Endothelial cell of umbilical vein (primary cell): ENCODE measurements at regions of chr11 and their contacts with region 1.

Region 1: GRCh38 chr11:111766093-111766833 is at the start of gene PPP2R1B:
- DNase-seq: peak; percentile 83
- H3K4me3 ChIP-seq: peak within 1 kb of the TSS; percentile 68 to 85 (median 73)
- H3K27ac ChIP-seq: peak within 1 kb of the TSS; percentile 51
- H3K4me1 ChIP-seq: peaks cover 15% of the 10 kb centered on the region
- H3K27me3 ChIP-seq: no peaks in the 10 kb centered on the region
- CTCF ChIP-seq: no peak
- POLR2A ChIP-seq: peak; percentile 16
- total RNA-seq, gene PPP2R1B: 42.7 and 50.8 TPM in 2 replicates

Region 2: DNA sequence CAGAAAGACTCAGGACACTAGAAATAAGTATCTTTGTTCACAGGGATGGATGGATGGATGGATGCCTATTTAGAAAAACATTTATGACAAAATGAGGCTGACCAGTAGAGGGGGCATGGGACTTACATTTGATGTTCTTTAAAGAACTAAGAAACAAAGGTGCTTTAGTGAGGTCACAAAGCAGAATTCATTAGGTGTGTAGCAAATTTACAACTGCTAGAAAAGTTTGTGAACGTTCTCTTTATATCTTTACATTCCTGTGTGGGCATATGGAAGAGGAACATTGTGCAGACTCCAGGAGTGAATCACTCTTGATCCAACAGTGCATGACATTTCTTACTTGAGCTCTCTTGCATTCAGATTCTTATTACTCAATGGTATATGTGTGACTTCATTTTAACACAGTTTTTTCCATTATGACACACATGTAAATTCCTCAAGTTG is 179.9 kb before region 1 on chr11:
- CTCF ChIA-PET with region 1: interaction called, 11 read pairs
- POLR2A ChIA-PET with region 1: no interaction called
- dilution Hi-C with region 1: no loop called
- intact Hi-C with region 1: no loop called
- DNase-seq: peak; percentile 59
- H3K4me3 ChIP-seq: no peak overlapping the region
- H3K27ac ChIP-seq: no peak overlapping the region
- H3K4me1 ChIP-seq: peaks cover 8% of the 10 kb centered on the region
- H3K27me3 ChIP-seq: peaks cover 0 to 2% of the 10 kb centered on the region in 2 experiments
- CTCF ChIP-seq: peak; percentile 38 to 49
- POLR2A ChIP-seq: no peak

Region 3: DNA sequence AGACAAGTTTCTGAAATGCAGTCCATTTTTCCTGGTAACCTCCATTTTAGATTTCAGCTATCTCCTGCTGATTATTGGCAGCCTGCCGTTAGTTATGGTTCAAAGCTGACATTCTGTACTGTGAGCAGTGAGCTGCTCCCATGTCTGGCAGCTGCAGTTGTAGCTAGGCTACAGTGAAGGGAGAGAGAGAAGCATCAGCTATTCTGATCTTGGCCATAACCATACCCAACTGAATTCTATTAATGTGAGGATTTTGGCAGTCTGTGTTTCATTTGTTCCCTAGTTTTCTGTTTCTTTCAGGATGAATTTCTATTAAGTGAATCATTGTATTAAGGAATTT is 130.6 kb before region 1 on chr11:
- CTCF ChIA-PET with region 1: no interaction called
- POLR2A ChIA-PET with region 1: no interaction called
- dilution Hi-C with region 1: no loop called
- intact Hi-C with region 1: loop called (anchors 1 kb)
- DNase-seq: no peak
- H3K4me3 ChIP-seq: no peak overlapping the region
- H3K27ac ChIP-seq: no peak overlapping the region
- H3K4me1 ChIP-seq: peaks cover 23% of the 10 kb centered on the region
- H3K27me3 ChIP-seq: no peaks in the 10 kb centered on the region
- CTCF ChIP-seq: no peak
- POLR2A ChIP-seq: no peak

Region 4: GRCh38 chr11:111707039-111707690 is 59.1 kb before region 1 on chr11:
- CTCF ChIA-PET with region 1: no interaction called
- POLR2A ChIA-PET with region 1: no interaction called
- dilution Hi-C with region 1: no loop called
- intact Hi-C with region 1: loop called (anchors 2 kb)
- DNase-seq: peak; percentile 99
- H3K4me3 ChIP-seq: no peak overlapping the region
- H3K27ac ChIP-seq: peak overlapping the region; percentile 77
- H3K4me1 ChIP-seq: peaks cover 15% of the 10 kb centered on the region
- H3K27me3 ChIP-seq: no peaks in the 10 kb centered on the region
- CTCF ChIP-seq: no peak
- POLR2A ChIP-seq: peak; percentile 24

Region 5: GRCh38 chr11:111735262-111736116 is 30.8 kb before region 1 on chr11:
- CTCF ChIA-PET with region 1: interaction called, 21 read pairs
- POLR2A ChIA-PET with region 1: interaction called, 5 read pairs
- dilution Hi-C with region 1: no loop called
- intact Hi-C with region 1: loop called (anchors 1 kb)
- DNase-seq: peak; percentile 98
- H3K4me3 ChIP-seq: no peak overlapping the region
- H3K27ac ChIP-seq: peak overlapping the region; percentile 85
- H3K4me1 ChIP-seq: peaks cover 59% of the 10 kb centered on the region
- H3K27me3 ChIP-seq: no peaks in the 10 kb centered on the region
- CTCF ChIP-seq: no peak
- POLR2A ChIP-seq: peak; percentile 67

Region 6: DNA sequence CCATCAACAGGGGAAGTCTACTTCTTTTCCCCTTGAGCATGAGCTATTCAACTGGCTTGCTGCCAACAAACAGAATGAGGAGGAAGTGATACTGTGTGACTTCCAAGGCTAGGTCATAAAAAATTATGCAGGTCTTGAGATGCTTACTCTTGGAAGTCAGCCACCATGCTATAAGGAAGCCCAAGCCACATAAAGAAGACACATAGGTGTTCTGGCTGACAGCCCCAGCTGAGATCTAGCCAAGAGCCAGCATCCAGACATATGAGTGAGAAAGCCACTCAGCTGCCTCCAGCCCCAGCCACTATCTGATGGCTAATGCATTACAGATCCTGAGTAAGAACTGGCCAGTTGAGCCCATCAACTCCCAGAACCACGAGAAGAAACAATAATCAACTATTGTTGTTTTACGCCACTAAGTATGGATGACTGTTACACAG is 30.9 kb after region 1 on chr11:
- CTCF ChIA-PET with region 1: no interaction called
- POLR2A ChIA-PET with region 1: no interaction called
- dilution Hi-C with region 1: no loop called
- intact Hi-C with region 1: loop called (anchors 1 kb)
- DNase-seq: peak; percentile 53
- H3K4me3 ChIP-seq: no peak overlapping the region
- H3K27ac ChIP-seq: no peak overlapping the region
- H3K4me1 ChIP-seq: no peaks in the 10 kb centered on the region
- H3K27me3 ChIP-seq: no peaks in the 10 kb centered on the region
- CTCF ChIP-seq: no peak
- POLR2A ChIP-seq: no peak